HepG2 (cell line): ENCODE measurements at regions of chr9 and their contacts with region 1.

Region 1: GRCh38 chr9:71768388-71769174 is at the start of gene CEMIP2:
- DNase-seq: peak; percentile 71
- ATAC-seq: peak; percentile 87
- H3K4me3 ChIP-seq: peak within 1 kb of the TSS; percentile 90 to 99 (median 98)
- H3K27ac ChIP-seq: peak within 1 kb of the TSS; percentile 92
- H3K4me1 ChIP-seq: peaks cover 31% of the 10 kb centered on the region
- H3K27me3 ChIP-seq: peaks cover 0 to 12% of the 10 kb centered on the region in 2 experiments; a peak in 1 of 5 replicates
- CTCF ChIP-seq: peak; percentile 73
- EP300 ChIP-seq: no peak; a peak in 1 of 4 replicates
- POLR2A ChIP-seq: peak; percentile 97 to 98
- RAD21 ChIP-seq: peak; percentile 94
- total RNA-seq, gene CEMIP2: 52.7 and 94.3 TPM in 2 replicates

Region 2: GRCh38 chr9:71285191-71285656 is 483.4 kb before region 1 on chr9:
- CTCF ChIA-PET with region 1: no interaction called
- POLR2A ChIA-PET with region 1: no interaction called
- in situ Hi-C with region 1: no loop called
- intact Hi-C with region 1: loop called (anchors 2 kb)
- DNase-seq: peak; percentile 62
- ATAC-seq: peak; percentile 91
- H3K4me3 ChIP-seq: no peak overlapping the region
- H3K27ac ChIP-seq: no peak overlapping the region
- H3K4me1 ChIP-seq: peaks cover 17% of the 10 kb centered on the region
- H3K27me3 ChIP-seq: no peaks in the 10 kb centered on the region
- CTCF ChIP-seq: peak; percentile 87
- EP300 ChIP-seq: no peak
- POLR2A ChIP-seq: no peak
- RAD21 ChIP-seq: 0 out of 2 replicates have a peak, but pooled peaks have one; percentile 36

Region 3: GRCh38 chr9:71562140-71562539 is 206.4 kb before region 1 on chr9:
- CTCF ChIA-PET with region 1: no interaction called
- POLR2A ChIA-PET with region 1: no interaction called
- in situ Hi-C with region 1: no loop called
- intact Hi-C with region 1: no loop called
- DNase-seq: no peak
- ATAC-seq: no peak
- H3K4me3 ChIP-seq: no peak overlapping the region
- H3K27ac ChIP-seq: no peak overlapping the region
- H3K4me1 ChIP-seq: no peaks in the 10 kb centered on the region
- H3K27me3 ChIP-seq: peaks cover 0 to 18% of the 10 kb centered on the region in 2 experiments; a peak in 1 of 5 replicates
- CTCF ChIP-seq: no peak
- EP300 ChIP-seq: no peak
- POLR2A ChIP-seq: no peak
- RAD21 ChIP-seq: no peak

Region 4: DNA sequence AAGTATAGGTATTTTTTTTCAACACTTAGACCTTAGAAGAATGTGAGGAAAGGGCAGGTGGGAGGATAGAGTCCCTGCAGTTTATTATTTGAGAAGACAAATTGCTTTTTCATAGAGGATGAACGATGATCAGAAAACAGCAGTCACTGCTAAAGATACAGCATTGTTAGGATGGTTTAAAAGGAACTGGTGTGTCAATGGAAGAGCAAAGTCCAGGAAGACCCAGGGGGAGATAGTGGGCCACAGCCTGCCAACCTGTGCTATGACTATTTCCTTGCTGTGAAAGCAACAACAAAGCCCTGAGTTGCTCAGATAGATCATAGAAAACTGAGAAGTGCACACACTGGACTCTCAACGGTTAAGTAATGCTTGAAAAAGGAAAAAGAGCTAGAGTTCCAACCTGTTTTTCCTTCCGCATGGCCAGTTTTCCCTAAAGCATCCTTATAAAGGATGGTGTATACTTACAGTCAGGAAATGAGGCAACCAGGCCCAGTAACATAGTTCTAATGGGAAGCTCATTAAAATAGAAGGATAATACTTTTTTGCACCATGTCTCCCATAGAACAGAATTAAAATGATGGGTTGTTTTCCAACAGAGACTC is 154.1 kb before region 1 on chr9:
- CTCF ChIA-PET with region 1: no interaction called
- POLR2A ChIA-PET with region 1: interaction called, 4 read pairs
- in situ Hi-C with region 1: loop called (anchors 5 kb)
- intact Hi-C with region 1: no loop called
- DNase-seq: peak; percentile 43
- ATAC-seq: peak; percentile 60
- H3K4me3 ChIP-seq: no peak overlapping the region
- H3K27ac ChIP-seq: no peak overlapping the region
- H3K4me1 ChIP-seq: peaks cover 29% of the 10 kb centered on the region
- H3K27me3 ChIP-seq: no peaks in the 10 kb centered on the region
- CTCF ChIP-seq: no peak
- EP300 ChIP-seq: no peak
- POLR2A ChIP-seq: no peak
- RAD21 ChIP-seq: no peak

Region 5: GRCh38 chr9:71642056-71642455 is 126.5 kb before region 1 on chr9:
- CTCF ChIA-PET with region 1: no interaction called
- POLR2A ChIA-PET with region 1: no interaction called
- in situ Hi-C with region 1: no loop called
- intact Hi-C with region 1: no loop called
- DNase-seq: no peak
- ATAC-seq: no peak
- H3K4me3 ChIP-seq: no peak overlapping the region
- H3K27ac ChIP-seq: no peak overlapping the region
- H3K4me1 ChIP-seq: peaks cover 32% of the 10 kb centered on the region
- H3K27me3 ChIP-seq: no peaks in the 10 kb centered on the region
- CTCF ChIP-seq: no peak
- EP300 ChIP-seq: no peak
- POLR2A ChIP-seq: no peak
- RAD21 ChIP-seq: no peak

Region 6: DNA sequence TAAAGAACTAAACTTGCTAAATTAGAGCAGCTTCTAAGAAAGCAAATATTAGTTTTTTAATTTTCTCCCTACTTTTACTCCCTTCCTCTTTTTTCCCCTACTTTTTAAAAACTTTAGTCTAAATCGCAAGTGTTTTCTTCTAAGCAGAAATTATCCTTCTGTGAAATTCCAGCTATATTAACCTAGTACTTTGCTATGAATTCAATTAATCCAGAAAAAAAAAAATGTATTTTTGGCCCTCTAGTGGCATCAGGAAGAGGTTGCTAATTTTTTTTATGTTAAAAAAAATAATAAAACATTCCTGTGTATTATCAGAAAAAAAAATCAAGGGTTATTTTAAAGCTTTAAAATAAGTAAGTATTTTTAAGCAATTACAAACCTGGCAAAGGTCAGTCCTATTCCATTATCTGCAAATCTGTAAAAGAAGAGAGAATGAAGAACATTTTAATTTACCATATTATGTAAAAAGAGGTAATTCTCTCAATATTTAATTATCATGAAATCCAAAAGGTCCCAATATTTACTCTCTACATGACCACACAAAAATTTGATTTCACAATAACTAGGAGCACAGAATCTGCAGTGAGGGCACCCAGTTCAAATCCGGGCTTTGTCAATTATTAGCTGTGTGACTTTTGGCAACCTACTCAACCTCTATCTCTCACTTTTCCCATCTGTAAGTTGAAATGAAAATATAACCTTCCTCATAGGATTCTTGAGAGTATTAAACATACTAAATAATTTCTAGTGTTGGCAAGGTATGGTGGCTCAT is 52.3 kb before region 1 on chr9:
- CTCF ChIA-PET with region 1: no interaction called
- POLR2A ChIA-PET with region 1: interaction called, 4 read pairs
- in situ Hi-C with region 1: no loop called
- intact Hi-C with region 1: loop called (anchors 1 kb)
- DNase-seq: no peak
- ATAC-seq: no peak
- H3K4me3 ChIP-seq: no peak overlapping the region
- H3K27ac ChIP-seq: no peak overlapping the region
- H3K4me1 ChIP-seq: peaks cover 11% of the 10 kb centered on the region; the same call in 1 of the 2 replicates
- H3K27me3 ChIP-seq: no peaks in the 10 kb centered on the region
- CTCF ChIP-seq: no peak
- EP300 ChIP-seq: no peak
- POLR2A ChIP-seq: no peak
- RAD21 ChIP-seq: no peak

Region 7: GRCh38 chr9:71741711-71742648 is 26.6 kb before region 1 on chr9:
- CTCF ChIA-PET with region 1: no interaction called
- POLR2A ChIA-PET with region 1: interaction called, 29 read pairs
- in situ Hi-C with region 1: no loop called
- intact Hi-C with region 1: loop called (anchors 2 kb)
- DNase-seq: peak; percentile 94
- ATAC-seq: peak; percentile 93
- H3K4me3 ChIP-seq: peak overlapping the region in 2 of 3 experiments; percentile 9 to 18; a peak in 2 of 6 replicates
- H3K27ac ChIP-seq: peak overlapping the region; percentile 82
- H3K4me1 ChIP-seq: peaks cover 56% of the 10 kb centered on the region
- H3K27me3 ChIP-seq: no peaks in the 10 kb centered on the region
- CTCF ChIP-seq: no peak
- EP300 ChIP-seq: peak in 1 of 2 experiments; percentile 95; a peak in 2 of 4 replicates
- POLR2A ChIP-seq: no peak
- RAD21 ChIP-seq: no peak

Region 8: GRCh38 chr9:71916834-71917534 is 148.4 kb after region 1 on chr9:
- CTCF ChIA-PET with region 1: no interaction called
- POLR2A ChIA-PET with region 1: no interaction called
- in situ Hi-C with region 1: no loop called
- intact Hi-C with region 1: no loop called
- DNase-seq: no peak
- ATAC-seq: no peak
- H3K4me3 ChIP-seq: no peak overlapping the region
- H3K27ac ChIP-seq: no peak overlapping the region
- H3K4me1 ChIP-seq: peaks cover 28% of the 10 kb centered on the region
- H3K27me3 ChIP-seq: no peaks in the 10 kb centered on the region; a peak in 1 of 5 replicates
- CTCF ChIP-seq: no peak
- EP300 ChIP-seq: no peak
- POLR2A ChIP-seq: no peak
- RAD21 ChIP-seq: no peak